Caco-2 (cell line): ENCODE measurements at regions of chr2 and their contacts with region 1.

Region 1: GRCh38 chr2:222707689-222708525 is 36.4 kb downstream of the MOGAT1 start:
- DNase-seq: peak; percentile 84 to 90
- H3K4me3 ChIP-seq: no peak overlapping the region
- H3K4me3 Mint-ChIP-seq: peak overlapping the region; percentile 40
- H3K27ac Mint-ChIP-seq: peak overlapping the region; percentile 21
- H3K4me1 ChIP-seq: peaks cover 16% of the 10 kb centered on the region
- H3K4me1 Mint-ChIP-seq: peaks cover 17% of the 10 kb centered on the region
- H3K27me3 ChIP-seq: no peaks in the 10 kb centered on the region
- H3K27me3 Mint-ChIP-seq: no peaks in the 10 kb centered on the region
- CTCF ChIP-seq: peak; percentile 98 to 99

Region 2: GRCh38 chr2:222730366-222730999 is 22.6 kb after region 1 on chr2:
- CTCF ChIA-PET with region 1: no interaction called
- POLR2A ChIA-PET with region 1: interaction called, 13 read pairs
- intact Hi-C with region 1: no loop called
- DNase-seq: no peak
- H3K4me3 ChIP-seq: no peak overlapping the region
- H3K4me3 Mint-ChIP-seq: no peak overlapping the region
- H3K27ac Mint-ChIP-seq: no peak overlapping the region
- H3K4me1 ChIP-seq: peaks cover 9% of the 10 kb centered on the region
- H3K4me1 Mint-ChIP-seq: peaks cover 20% of the 10 kb centered on the region
- H3K27me3 ChIP-seq: no peaks in the 10 kb centered on the region
- H3K27me3 Mint-ChIP-seq: no peaks in the 10 kb centered on the region
- CTCF ChIP-seq: no peak

Region 3: GRCh38 chr2:222776792-222777191 is 68.9 kb after region 1 on chr2:
- CTCF ChIA-PET with region 1: no interaction called
- POLR2A ChIA-PET with region 1: no interaction called
- intact Hi-C with region 1: no loop called
- DNase-seq: no peak
- H3K4me3 ChIP-seq: no peak overlapping the region
- H3K4me3 Mint-ChIP-seq: no peak overlapping the region
- H3K27ac Mint-ChIP-seq: no peak overlapping the region
- H3K4me1 ChIP-seq: 0 out of 2 replicates have a peak, but pooled peaks cover 12% of the 10 kb centered on the region
- H3K4me1 Mint-ChIP-seq: no peaks in the 10 kb centered on the region
- H3K27me3 ChIP-seq: no peaks in the 10 kb centered on the region
- H3K27me3 Mint-ChIP-seq: no peaks in the 10 kb centered on the region
- CTCF ChIP-seq: no peak

Region 4: DNA sequence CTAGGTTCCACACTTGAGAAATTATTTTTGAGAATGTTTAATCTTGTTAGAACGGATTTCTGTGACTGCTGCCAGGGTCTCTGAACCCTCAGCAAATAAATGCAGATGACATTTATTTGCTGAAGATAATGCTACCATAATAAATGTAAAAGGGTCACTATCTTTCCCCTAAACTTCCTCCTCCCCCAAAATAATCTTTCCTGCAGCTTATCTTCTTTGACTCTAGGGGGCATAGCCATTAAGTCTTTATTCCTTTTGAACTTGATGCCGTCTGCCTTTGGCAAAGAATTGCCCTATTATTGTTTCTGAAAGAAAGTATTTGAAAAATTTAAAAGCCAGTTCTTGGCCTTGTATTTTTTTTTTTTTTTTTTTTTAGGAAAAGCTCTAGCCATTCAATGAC is 89.4 kb after region 1 on chr2:
- CTCF ChIA-PET with region 1: interaction called, 18 read pairs
- POLR2A ChIA-PET with region 1: interaction called, 7 read pairs
- intact Hi-C with region 1: loop called (anchors 1 kb)
- DNase-seq: no peak
- H3K4me3 ChIP-seq: no peak overlapping the region
- H3K4me3 Mint-ChIP-seq: peak overlapping the region; percentile 39
- H3K27ac Mint-ChIP-seq: peak overlapping the region; percentile 20
- H3K4me1 ChIP-seq: peaks cover 64% of the 10 kb centered on the region
- H3K4me1 Mint-ChIP-seq: peaks cover 48% of the 10 kb centered on the region
- H3K27me3 ChIP-seq: no peaks in the 10 kb centered on the region
- H3K27me3 Mint-ChIP-seq: no peaks in the 10 kb centered on the region
- CTCF ChIP-seq: peak; percentile 33 to 43

Region 5: DNA sequence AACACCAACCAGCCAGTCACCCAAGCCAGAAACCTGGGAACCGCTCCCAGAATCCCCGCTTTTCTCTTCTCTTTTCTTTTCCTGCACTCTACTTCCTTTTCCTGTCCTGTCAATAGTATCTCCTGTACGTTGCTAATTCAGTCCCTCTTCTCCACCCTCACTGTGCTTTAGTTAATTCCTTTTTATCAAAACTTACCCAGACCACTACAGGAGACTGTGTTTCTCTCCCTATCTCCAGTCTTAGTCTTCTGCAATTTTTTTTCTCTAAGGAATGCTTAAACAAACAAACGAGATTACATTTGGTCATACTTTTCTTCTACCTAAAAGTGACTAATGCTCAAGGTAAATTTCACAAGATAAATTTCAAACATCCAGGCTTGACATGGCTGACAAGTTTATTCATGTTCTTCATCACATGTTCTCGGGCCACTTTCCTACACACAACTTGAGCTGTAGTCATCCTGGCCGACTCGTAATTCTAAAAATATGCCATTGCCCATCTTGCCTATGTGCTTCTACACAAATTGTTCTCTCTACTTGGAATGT is 129.7 kb after region 1 on chr2:
- CTCF ChIA-PET with region 1: interaction called, 4 read pairs
- POLR2A ChIA-PET with region 1: no interaction called
- intact Hi-C with region 1: loop called (anchors 1 kb)
- DNase-seq: peak; percentile 52 to 60
- H3K4me3 ChIP-seq: no peak overlapping the region
- H3K4me3 Mint-ChIP-seq: peak overlapping the region; percentile 59
- H3K27ac Mint-ChIP-seq: peak overlapping the region; percentile 88
- H3K4me1 ChIP-seq: peaks cover 56% of the 10 kb centered on the region
- H3K4me1 Mint-ChIP-seq: peaks cover 15% of the 10 kb centered on the region
- H3K27me3 ChIP-seq: no peaks in the 10 kb centered on the region
- H3K27me3 Mint-ChIP-seq: no peaks in the 10 kb centered on the region
- CTCF ChIP-seq: no peak

Region 6: DNA sequence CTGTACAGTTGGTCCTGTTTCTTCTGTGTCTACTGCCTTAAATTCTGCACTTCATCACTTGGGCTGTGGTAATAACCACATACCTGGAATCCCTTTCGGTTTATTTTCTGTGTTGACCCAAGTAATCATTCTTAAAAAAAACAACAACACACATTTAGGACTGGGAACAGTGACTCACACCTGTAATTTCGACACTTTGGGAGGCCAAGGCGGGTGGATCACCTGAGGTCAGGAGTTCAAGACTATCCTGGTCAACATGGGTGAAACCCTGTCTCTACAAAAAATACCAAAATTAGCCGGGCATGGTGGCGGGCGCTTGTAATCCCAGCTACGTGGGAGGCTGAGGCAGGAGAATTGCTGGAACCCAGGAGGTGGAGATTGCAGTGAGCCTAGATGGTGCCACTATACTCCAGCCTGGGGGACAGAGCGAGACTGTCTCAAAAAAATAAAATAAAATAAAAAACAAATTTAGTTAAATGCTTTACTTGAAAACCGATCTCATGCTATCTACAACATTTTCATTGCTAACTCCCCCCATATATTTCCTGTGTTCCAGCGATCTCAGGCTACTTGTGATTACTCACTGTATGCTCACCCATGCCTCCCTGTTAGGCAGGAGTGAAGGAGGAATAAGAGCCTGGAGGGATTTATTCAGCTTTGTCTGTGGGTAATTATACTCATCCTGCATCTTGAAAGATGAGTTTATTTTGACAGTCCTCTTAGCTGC is 171.1 kb after region 1 on chr2:
- CTCF ChIA-PET with region 1: no interaction called
- POLR2A ChIA-PET with region 1: interaction called, 3 read pairs
- intact Hi-C with region 1: loop called (anchors 1 kb)
- DNase-seq: peak in 1 of 2 experiments; percentile 46
- H3K4me3 ChIP-seq: no peak overlapping the region
- H3K4me3 Mint-ChIP-seq: no peak overlapping the region
- H3K27ac Mint-ChIP-seq: peak overlapping the region; percentile 3
- H3K4me1 ChIP-seq: peaks cover 41% of the 10 kb centered on the region
- H3K4me1 Mint-ChIP-seq: peaks cover 30% of the 10 kb centered on the region
- H3K27me3 ChIP-seq: no peaks in the 10 kb centered on the region
- H3K27me3 Mint-ChIP-seq: no peaks in the 10 kb centered on the region
- CTCF ChIP-seq: no peak

Region 7: GRCh38 chr2:222939208-222939856 is 231.4 kb after region 1 on chr2:
- CTCF ChIA-PET with region 1: interaction called, 30 read pairs
- POLR2A ChIA-PET with region 1: no interaction called
- intact Hi-C with region 1: loop called (anchors 1 kb)
- DNase-seq: peak; percentile 86 to 91
- H3K4me3 ChIP-seq: no peak overlapping the region
- H3K4me3 Mint-ChIP-seq: no peak overlapping the region
- H3K27ac Mint-ChIP-seq: no peak overlapping the region
- H3K4me1 ChIP-seq: peaks cover 23% of the 10 kb centered on the region
- H3K4me1 Mint-ChIP-seq: peaks cover 23% of the 10 kb centered on the region
- H3K27me3 ChIP-seq: no peaks in the 10 kb centered on the region
- H3K27me3 Mint-ChIP-seq: no peaks in the 10 kb centered on the region
- CTCF ChIP-seq: peak; percentile 97 to 98